ENCODE measurements at regions of chr4 and their contacts with region 1.

Region 1: GRCh38 chr4:2241410-2242353 is at the starts of genes HAUS3 and POLN:
- DNase-seq: peak; percentile 98 to 99 (median 98)
- H3K4me3 ChIP-seq: peak within 1 kb of the TSS; percentile 61 to 93 (median 86)
- H3K4me3 Mint-ChIP-seq: peak within 1 kb of the TSS; percentile 88 to 95
- H3K27ac ChIP-seq: peak within 1 kb of the TSS; percentile 43 to 86
- H3K27ac Mint-ChIP-seq: peak within 1 kb of the TSS; percentile 86 to 94 (median 91)
- H3K4me1 ChIP-seq: peaks cover 40 to 61% of the 10 kb centered on the region in 2 donors
- H3K4me1 Mint-ChIP-seq: peaks cover 60% of the 10 kb centered on the region
- H3K27me3 ChIP-seq: no peaks in the 10 kb centered on the region
- H3K27me3 Mint-ChIP-seq: no peaks in the 10 kb centered on the region
- CTCF ChIP-seq: no peak
- polyA plus RNA-seq, gene HAUS3: 4.4 to 5.5 (median 5.0) TPM
- polyA plus RNA-seq, gene POLN: 0.08 to 0.33 (median 0.28) TPM

Region 2: DNA sequence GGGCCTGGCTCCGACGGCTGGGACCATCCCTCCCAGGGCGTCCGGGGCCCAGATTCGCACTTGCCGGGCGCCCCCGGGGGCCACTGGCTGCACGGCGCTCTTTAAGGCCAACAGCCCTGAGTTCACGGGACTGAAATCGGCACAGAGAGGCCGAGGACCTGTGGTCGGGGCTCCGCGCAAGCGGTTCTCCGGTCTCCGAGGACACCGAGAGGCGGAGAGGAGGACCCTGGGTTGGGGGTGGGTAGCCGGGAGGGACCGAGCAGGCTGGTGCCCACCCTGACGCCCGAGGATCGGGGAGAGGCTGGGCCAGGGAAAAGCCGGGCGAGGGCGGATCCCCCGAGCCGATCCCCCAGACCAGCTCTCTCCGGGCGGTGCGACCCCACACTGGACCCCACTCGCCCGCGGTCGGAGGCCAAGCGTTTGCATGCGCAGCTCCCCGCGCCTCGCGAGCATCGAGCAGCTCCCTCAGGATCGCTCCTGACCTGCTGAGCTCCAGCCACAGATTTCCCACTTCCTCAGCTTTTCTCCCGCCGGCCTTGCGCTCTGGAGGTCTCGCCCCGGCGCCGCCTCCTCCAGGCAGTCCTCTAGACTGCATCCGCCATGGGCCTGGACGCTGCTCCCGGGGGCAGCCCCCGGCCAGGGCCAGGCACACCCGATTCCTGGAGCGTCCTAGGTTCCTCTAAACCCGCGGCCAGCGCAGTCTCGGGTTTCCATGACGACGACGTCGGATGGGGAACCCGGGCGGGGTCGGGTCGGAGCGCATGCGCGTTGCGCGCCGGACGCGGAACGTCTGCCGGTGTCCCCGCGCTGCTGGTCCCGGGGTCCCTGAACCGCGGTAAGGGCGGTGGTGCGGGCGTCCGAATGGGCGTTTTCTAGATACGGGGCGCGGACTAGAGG is 200.2 kb before region 1 on chr4:
- intact Hi-C with region 1: no loop called
- DNase-seq: peak; percentile 92 to 95 (median 94)
- H3K4me3 ChIP-seq: peak overlapping the region; percentile 43 to 79 (median 64)
- H3K4me3 Mint-ChIP-seq: peak overlapping the region; percentile 84 to 97
- H3K27ac ChIP-seq: peak overlapping the region in 1 of 2 donors; percentile 56
- H3K27ac Mint-ChIP-seq: peak overlapping the region in 5 of 7 donors; percentile 15 to 84 (median 78)
- H3K4me1 ChIP-seq: peaks cover 14 to 19% of the 10 kb centered on the region in 2 donors
- H3K4me1 Mint-ChIP-seq: peaks cover 12% of the 10 kb centered on the region
- H3K27me3 ChIP-seq: peaks cover 17 to 56% of the 10 kb centered on the region in 2 donors
- H3K27me3 Mint-ChIP-seq: peaks cover 35 to 71% (median 41%) of the 10 kb centered on the region in 3 donors
- CTCF ChIP-seq: no peak

Region 3: DNA sequence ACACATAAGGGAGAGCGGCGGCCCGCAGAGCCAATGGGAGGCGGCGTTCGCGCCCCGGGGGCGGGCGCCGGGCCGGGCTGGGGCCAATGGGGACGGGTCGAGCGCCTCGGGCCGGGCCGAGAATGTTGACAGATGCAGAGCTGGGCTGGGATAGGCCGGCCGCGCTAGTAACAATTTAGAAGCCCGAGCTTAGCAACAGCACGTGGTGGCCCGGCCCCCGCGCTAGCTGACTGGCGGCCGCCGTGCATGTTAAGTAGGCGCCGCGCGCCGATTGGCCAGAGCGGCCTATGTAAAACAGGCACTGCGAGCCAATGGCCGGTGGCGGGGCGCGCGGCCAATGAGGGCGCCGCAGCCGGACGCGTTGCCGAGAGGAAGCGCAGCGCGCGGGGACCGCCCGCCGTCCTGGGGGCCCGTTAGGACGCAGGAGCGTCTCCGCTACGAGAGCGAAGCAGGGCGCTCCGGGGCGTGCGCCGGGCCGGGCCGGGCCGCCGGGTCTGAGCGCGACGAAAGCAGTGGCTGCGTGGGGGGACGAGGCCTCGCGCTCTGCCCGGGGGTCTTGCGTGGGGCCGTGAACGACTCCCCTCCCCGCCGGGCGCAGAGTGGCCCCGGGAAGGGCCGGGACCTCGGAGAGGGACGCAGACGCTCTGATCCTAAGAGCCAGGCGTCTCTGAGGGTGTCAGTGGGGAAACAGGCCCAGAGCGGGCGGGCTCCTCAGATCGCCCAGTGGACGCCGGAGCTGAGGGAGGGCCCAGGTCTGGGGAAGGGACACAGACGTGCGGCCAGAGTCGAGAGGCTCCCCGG is 20.7 kb after region 1 on chr4:
- intact Hi-C with region 1: loop called in 1 of 2 experiments (anchors 2 kb)
- DNase-seq: peak; percentile 98 to 99 (median 98)
- H3K4me3 ChIP-seq: peak overlapping the region; percentile 53 to 93 (median 65)
- H3K4me3 Mint-ChIP-seq: peak overlapping the region; percentile 74 to 83
- H3K27ac ChIP-seq: peak overlapping the region; percentile 86 to 87
- H3K27ac Mint-ChIP-seq: peak overlapping the region; percentile 65 to 87 (median 81)
- H3K4me1 ChIP-seq: peaks cover 22 to 25% of the 10 kb centered on the region in 2 donors
- H3K4me1 Mint-ChIP-seq: peaks cover 15% of the 10 kb centered on the region
- H3K27me3 ChIP-seq: no peaks in the 10 kb centered on the region
- H3K27me3 Mint-ChIP-seq: peaks cover 0 to 3% (median 0%) of the 10 kb centered on the region in 3 donors
- CTCF ChIP-seq: no peak

Region 4: DNA sequence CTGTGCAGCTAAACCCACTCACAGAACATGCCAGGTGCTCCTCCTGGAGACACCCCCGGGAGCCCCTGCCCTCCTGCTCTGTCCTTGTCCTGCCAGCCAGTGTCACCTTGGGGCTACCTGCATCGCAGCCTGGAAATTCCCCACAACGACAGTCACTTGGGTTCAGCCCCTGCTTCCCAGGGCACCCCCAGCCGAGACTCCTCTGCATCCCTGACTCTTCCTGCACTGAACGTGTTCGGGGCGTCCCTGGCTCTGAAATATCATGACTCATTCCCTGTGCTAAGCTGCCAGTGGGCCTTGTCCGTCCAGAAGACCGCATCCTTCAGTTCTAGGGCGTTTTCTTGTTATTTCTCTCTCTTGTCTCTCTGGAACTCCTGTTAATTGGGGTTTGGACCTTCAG is 182.9 kb after region 1 on chr4:
- intact Hi-C with region 1: loop called in 1 of 2 experiments (anchors 5 kb)
- DNase-seq: no peak
- H3K4me3 ChIP-seq: no peak overlapping the region
- H3K4me3 Mint-ChIP-seq: no peak overlapping the region
- H3K27ac ChIP-seq: no peak overlapping the region
- H3K27ac Mint-ChIP-seq: no peak overlapping the region
- H3K4me1 ChIP-seq: peaks cover 8 to 9% of the 10 kb centered on the region in 2 donors
- H3K4me1 Mint-ChIP-seq: peaks cover 13% of the 10 kb centered on the region
- H3K27me3 ChIP-seq: peaks cover 0 to 7% of the 10 kb centered on the region in 2 donors
- H3K27me3 Mint-ChIP-seq: peaks cover 18 to 20% (median 19%) of the 10 kb centered on the region in 3 donors
- CTCF ChIP-seq: no peak

Region 5: DNA sequence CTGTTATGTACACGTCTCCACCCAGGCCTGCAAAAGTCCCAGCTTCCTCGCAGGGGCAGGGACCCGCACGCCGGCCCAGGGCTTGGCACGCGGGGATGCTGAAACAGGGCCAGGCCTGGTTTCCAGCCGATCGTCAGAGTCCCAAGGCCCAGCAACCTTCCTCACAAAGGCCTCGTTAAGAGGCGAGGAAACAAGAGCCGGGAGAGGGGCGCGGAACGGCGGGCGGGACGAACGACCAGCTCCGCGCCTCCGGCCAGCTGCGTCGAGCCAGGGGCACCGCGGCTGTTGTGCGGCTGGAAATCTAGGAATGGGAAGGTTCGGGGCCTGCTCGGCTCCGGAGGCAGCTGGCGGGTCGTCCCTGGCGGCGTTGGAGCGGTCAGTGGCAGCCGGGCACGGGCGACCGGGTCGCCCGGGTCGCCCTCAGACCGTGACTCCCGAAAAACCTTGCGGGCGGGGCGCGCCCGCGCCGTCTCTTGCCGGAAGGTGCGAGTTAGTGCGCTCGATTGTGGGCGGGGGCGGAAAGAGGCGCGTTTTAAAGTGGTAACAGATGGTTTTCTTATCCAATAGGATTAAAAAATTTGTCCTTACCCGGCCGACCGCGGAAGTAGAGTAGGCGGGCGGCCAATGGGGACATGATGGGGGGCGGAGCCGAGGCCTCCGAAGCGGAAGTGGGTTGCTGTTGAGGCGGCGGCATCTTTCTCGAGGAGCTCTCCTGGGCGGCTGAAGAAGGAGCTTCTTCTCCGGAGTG is 226.9 kb after region 1 on chr4 and contains the start of gene RNF4:
- intact Hi-C with region 1: loop called (anchors 5 kb)
- DNase-seq: peak; percentile 95
- H3K4me3 ChIP-seq: peak within 1 kb of the TSS; percentile 80 to 97 (median 83)
- H3K4me3 Mint-ChIP-seq: peak within 1 kb of the TSS; percentile 92 to 96
- H3K27ac ChIP-seq: peak within 1 kb of the TSS; percentile 84 to 91
- H3K27ac Mint-ChIP-seq: peak within 1 kb of the TSS; percentile 91 to 97 (median 93)
- H3K4me1 ChIP-seq: peaks cover 14 to 29% of the 10 kb centered on the region in 2 donors
- H3K4me1 Mint-ChIP-seq: peaks cover 35% of the 10 kb centered on the region
- H3K27me3 ChIP-seq: peaks cover 2 to 4% of the 10 kb centered on the region in 2 donors
- H3K27me3 Mint-ChIP-seq: peaks cover 4 to 10% (median 9%) of the 10 kb centered on the region in 3 donors
- CTCF ChIP-seq: no peak
- polyA plus RNA-seq, gene RNF4: 28.8 to 41.3 (median 37.0) TPM

Region 6: DNA sequence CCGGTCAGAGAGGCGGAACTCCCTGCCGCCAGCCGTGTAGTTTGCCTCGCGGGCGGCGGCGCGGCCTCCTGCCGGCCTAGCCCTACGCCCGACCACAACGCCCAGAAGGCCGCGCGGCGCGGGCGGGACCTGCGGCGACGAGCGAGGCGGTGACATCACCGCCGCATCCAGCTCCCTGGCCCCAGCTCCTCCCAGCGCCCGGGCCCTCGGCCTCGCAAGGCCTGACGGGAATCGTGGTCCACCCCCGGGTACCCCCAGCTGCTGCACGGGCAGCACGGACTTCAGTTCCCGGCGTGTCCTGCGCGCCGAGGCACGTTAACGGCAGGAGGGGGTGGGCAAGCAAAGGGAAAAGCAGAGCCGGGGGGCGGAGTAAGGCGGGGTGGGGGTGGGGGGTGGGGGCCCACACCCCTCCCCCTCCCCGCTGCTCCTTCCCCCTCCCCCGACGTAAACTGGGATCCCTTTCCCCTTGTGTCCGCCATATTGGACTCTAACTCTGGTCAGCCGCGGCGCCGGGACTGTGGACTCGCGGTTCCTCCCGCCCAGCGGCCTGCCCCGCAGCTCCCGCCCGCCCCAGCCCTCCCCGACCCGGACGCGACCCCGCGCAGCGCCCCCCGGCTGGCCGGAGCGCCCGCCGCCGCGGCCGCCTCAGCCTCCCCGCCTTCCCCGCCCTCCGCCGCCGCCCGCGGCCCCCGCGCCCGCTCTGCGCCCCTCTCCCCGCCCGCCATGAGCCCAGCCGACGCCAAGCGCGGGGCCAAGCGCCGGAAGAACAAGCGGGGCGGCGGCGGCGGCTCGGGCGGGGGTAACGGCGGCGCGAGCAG is 294.7 kb after region 1 on chr4 and contains the start of gene FAM193A:
- intact Hi-C with region 1: loop called (anchors 5 kb)
- DNase-seq: peak; percentile 97 to 100 (median 99)
- H3K4me3 ChIP-seq: peak within 1 kb of the TSS; percentile 83 to 93 (median 83)
- H3K4me3 Mint-ChIP-seq: peak within 1 kb of the TSS; percentile 90 to 95
- H3K27ac ChIP-seq: peak within 1 kb of the TSS; percentile 89 to 98
- H3K27ac Mint-ChIP-seq: peak within 1 kb of the TSS; percentile 90 to 98 (median 96)
- H3K4me1 ChIP-seq: peaks cover 19 to 23% of the 10 kb centered on the region in 2 donors
- H3K4me1 Mint-ChIP-seq: peaks cover 23% of the 10 kb centered on the region
- H3K27me3 ChIP-seq: no peaks in the 10 kb centered on the region
- H3K27me3 Mint-ChIP-seq: peaks cover 1 to 2% (median 1%) of the 10 kb centered on the region in 3 donors
- CTCF ChIP-seq: no peak
- polyA plus RNA-seq, gene FAM193A: 0.66 to 11.8 (median 0.82) TPM

Region 7: GRCh38 chr4:2755837-2756694 is 514.4 kb after region 1 on chr4 and contains the start of gene TNIP2:
- intact Hi-C with region 1: loop called in 1 of 2 experiments (anchors 5 kb)
- DNase-seq: peak; percentile 69 to 82 (median 73)
- H3K4me3 ChIP-seq: peak within 1 kb of the TSS; percentile 67 to 92 (median 83)
- H3K4me3 Mint-ChIP-seq: peak within 1 kb of the TSS; percentile 72 to 82
- H3K27ac ChIP-seq: peak within 1 kb of the TSS; percentile 23 to 80
- H3K27ac Mint-ChIP-seq: peak within 1 kb of the TSS; percentile 30 to 88 (median 66)
- H3K4me1 ChIP-seq: peaks cover 15 to 19% of the 10 kb centered on the region in 2 donors
- H3K4me1 Mint-ChIP-seq: peaks cover 35% of the 10 kb centered on the region
- H3K27me3 ChIP-seq: no peaks in the 10 kb centered on the region
- H3K27me3 Mint-ChIP-seq: peaks cover 0 to 10% (median 3%) of the 10 kb centered on the region in 3 donors
- CTCF ChIP-seq: peak; percentile 34
- polyA plus RNA-seq, gene TNIP2: 27.6 to 75.7 (median 28.2) TPM

Measured in CD14-positive monocyte (primary cell).